Sigmoid colon (tissue), 7 donors: ENCODE measurements at regions of chrX and their contacts with region 1.

Region 1: GRCh38 chrX:46686003-46686645 is 72.8 kb downstream of the SLC9A7 start:
- DNase-seq: no peak
- H3K4me3 ChIP-seq: no peak overlapping the region
- H3K27ac ChIP-seq: no peak overlapping the region
- H3K4me1 ChIP-seq: no peaks in the 10 kb centered on the region
- H3K27me3 ChIP-seq: no peaks in the 10 kb centered on the region
- CTCF ChIP-seq: peak; percentile 12 to 47 (median 15)
- EP300 ChIP-seq: no peak
- POLR2A ChIP-seq: no peak

Region 2: GRCh38 chrX:46554942-46555341 is 131.2 kb before region 1 on chrX:
- intact Hi-C with region 1: loop called (anchors 10 kb)
- DNase-seq: no peak
- H3K4me3 ChIP-seq: no peak overlapping the region
- H3K27ac ChIP-seq: no peak overlapping the region
- H3K4me1 ChIP-seq: no peaks in the 10 kb centered on the region
- H3K27me3 ChIP-seq: no peaks in the 10 kb centered on the region
- CTCF ChIP-seq: no peak
- EP300 ChIP-seq: no peak
- POLR2A ChIP-seq: no peak